Activated B cell treated with CpG ODN at 0.5 μM for 24 hours (primary cell): ENCODE measurements at regions of chr1 and their contacts with region 1.

Region 1: DNA sequence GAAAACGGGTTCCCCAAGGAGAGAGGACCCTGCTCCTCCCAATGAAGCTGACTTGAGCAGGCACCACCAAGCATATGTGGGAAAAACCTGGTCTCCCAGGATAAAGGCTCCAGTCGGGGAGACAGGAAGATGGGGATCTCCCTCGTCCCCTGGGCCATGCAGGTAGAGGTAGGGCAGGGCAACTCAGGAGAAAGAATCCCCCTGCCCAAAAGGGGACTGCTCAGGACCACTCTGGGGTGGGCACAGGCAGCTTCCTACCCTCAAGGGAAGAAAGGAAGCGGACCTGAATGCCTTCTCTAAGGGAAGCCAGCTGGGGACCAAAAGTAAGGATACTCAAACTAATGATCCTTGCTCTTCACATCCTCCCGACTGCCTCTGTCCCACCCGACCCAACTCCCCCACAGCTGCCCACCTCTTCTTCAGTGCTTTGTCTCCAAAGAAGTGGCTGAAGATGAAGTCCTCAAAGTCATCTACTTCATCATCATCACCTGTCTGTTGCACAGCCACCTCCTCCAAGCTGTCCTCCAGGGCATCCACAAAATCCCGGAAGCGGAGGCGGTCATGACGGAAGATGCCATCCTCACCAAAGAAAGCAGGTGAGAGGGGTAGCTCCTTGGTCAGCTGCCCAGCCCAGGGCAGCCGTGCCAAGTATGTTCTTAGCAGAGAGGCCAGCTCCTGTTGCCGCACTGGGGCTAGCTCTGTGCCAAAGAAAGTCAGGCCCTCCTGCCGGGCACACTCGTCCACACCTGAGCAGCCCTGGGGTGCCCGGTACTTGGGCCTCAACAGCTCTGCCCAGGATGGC is 8.8 kb upstream of the PMVK start:
- DNase-seq: no peak
- ATAC-seq: no peak
- H3K4me3 Mint-ChIP-seq: no peak overlapping the region
- H3K27ac Mint-ChIP-seq: peak overlapping the region; percentile 86
- H3K4me1 Mint-ChIP-seq: peaks cover 51% of the 10 kb centered on the region
- H3K27me3 Mint-ChIP-seq: no peaks in the 10 kb centered on the region
- CTCF ChIP-seq: no peak

Region 2: DNA sequence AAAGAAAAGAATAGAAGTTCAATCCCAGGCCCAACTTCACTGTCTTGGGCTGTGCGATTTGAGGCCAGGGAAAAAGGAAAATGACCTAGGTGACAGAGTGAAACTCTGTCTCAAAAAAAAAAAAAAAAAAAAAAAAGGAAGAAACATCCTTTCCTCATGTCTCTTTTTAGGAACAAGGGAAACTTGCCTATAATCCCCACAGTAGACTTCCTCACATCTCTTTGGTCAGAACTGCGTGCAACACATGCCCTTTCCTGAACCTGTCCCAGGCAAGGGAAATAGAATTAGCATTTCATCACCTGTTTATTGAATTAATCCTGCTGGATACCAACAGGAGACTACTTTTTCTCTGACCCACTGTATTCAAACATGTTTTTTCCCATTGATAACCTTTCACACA is 90.6 kb after region 1 on chr1:
- CTCF ChIA-PET with region 1: no interaction called
- POLR2A ChIA-PET with region 1: interaction called, 10 read pairs
- intact Hi-C with region 1: no loop called
- DNase-seq: no peak
- ATAC-seq: no peak
- H3K4me3 Mint-ChIP-seq: no peak overlapping the region
- H3K27ac Mint-ChIP-seq: no peak overlapping the region
- H3K4me1 Mint-ChIP-seq: no peaks in the 10 kb centered on the region
- H3K27me3 Mint-ChIP-seq: peaks cover 8% of the 10 kb centered on the region
- CTCF ChIP-seq: no peak